Activated naive CD4-positive, alpha-beta T cell treated with anti-CD3 and anti-CD28 coated beads for 36 hours (primary cell): ENCODE measurements at regions of chr1 and their contacts with region 1.

Region 1: DNA sequence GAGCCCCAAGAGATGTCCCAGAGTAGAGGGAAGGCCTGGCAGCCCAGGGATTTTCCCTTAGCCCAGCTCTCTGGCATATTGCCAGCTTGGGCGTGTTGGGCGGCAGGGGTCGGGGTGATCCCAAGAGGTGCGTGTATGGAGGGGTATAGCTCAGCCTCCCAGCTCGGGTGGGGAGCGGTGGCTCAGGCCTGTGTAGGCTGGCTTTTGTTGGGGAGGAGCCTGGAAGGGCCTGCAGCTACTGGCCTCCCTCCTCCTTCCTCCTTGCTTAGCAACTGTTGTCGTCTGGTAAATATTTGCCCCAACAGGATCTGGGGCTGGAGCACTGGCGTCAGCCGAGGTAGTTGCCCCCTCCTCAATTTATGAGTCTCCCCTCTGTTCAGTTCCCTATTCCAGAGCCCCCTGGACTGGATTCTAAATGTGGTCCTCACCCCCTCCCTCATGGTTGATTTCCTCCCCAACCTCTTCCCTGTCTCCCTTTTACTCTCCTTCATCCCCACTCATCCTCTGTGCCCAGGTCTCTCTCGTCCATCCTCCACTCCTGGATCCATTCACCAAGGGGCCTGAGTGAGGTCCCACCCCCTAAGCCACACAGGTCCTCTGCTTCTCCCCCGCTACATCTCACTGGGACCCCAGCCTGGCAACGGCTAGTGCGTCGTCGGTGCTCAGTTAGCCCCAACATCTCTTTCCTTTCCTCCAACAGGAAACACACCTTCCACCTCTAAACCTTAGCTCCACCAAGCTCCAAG is 10.3 kb upstream of the LMNA start:
- DNase-seq: peak; percentile 48
- H3K4me3 Mint-ChIP-seq: no peak overlapping the region
- H3K27ac Mint-ChIP-seq: peak overlapping the region; percentile 63
- H3K4me1 Mint-ChIP-seq: peaks cover 61% of the 10 kb centered on the region
- H3K27me3 Mint-ChIP-seq: peaks cover 16% of the 10 kb centered on the region

Region 2: GRCh38 chr1:156056326-156056849 is 47.9 kb before region 1 on chr1:
- CTCF ChIA-PET with region 1: no interaction called
- intact Hi-C with region 1: no loop called
- DNase-seq: no peak
- H3K4me3 Mint-ChIP-seq: peak overlapping the region; percentile 3
- H3K27ac Mint-ChIP-seq: no peak overlapping the region
- H3K4me1 Mint-ChIP-seq: peaks cover 26% of the 10 kb centered on the region
- H3K27me3 Mint-ChIP-seq: no peaks in the 10 kb centered on the region

Region 3: GRCh38 chr1:156114101-156114916 is 10.1 kb after region 1 on chr1 and contains the start of gene LMNA:
- CTCF ChIA-PET with region 1: interaction called, 34 read pairs
- intact Hi-C with region 1: loop called (anchors 1 kb)
- DNase-seq: peak; percentile 91
- H3K4me3 Mint-ChIP-seq: peak within 1 kb of the TSS; percentile 86
- H3K27ac Mint-ChIP-seq: peak within 1 kb of the TSS; percentile 50
- H3K4me1 Mint-ChIP-seq: peaks cover 32% of the 10 kb centered on the region
- H3K27me3 Mint-ChIP-seq: peaks cover 22% of the 10 kb centered on the region
- total RNA-seq, gene LMNA: 62.1 to 62.6 TPM

Region 4: GRCh38 chr1:156123356-156124196 is 19.3 kb after region 1 on chr1:
- CTCF ChIA-PET with region 1: interaction called, 737 read pairs
- intact Hi-C with region 1: loop called (anchors 1 kb)
- DNase-seq: peak; percentile 88
- H3K4me3 Mint-ChIP-seq: peak overlapping the region; percentile 32
- H3K27ac Mint-ChIP-seq: peak overlapping the region; percentile 72
- H3K4me1 Mint-ChIP-seq: peaks cover 63% of the 10 kb centered on the region
- H3K27me3 Mint-ChIP-seq: peaks cover 7% of the 10 kb centered on the region